Brain microvascular endothelial cell (primary cell): ENCODE measurements at regions of chr5 and their contacts with region 1.

Region 1: DNA sequence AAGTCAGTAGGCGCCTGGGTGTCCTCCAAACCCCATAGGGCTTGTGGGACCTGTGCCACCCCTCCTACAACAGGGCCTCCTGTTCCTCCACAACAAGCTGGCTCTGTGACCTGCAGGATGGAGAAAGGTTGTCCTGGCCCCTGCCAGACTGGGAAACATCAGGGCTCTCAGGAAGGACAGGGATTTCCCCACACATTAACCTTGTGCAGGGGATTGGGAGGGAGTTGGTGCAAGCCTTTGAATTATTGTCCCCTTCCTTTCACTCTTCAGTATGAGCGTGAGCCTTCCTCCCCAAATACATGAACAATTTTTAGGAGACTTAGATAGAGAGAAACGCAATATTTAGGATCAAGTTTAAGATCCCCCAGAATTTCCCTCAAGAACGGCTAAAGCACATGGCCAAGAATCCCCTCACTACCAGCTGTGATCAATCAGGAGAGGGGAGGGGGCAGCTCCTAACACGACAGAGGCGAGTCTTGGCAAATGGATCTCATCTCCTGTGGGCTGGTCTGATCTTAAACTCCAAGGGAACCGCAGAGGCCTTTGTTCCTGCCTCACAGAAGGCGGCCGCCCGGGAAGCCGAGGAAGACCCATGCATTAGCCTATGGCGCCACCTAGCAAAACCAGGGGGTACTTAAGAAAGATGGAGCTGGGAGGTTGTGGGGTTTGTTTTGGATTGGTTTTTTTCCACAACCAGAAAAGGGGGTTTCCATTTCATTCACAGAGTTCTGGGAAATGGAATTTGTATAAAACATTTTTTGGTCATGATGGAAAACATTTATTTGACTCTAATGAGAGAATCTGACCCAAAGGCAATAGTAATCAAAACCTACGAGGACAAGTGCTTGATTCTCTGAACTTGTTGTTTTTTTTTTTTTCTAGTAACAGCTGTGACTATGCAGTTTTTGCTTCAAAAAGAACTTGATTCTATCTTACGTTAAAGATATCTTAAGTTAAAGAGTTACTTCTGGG is 36.1 kb upstream of the OSMR start:
- DNase-seq: peak; percentile 88
- H3K4me3 ChIP-seq: no peak overlapping the region
- H3K27ac ChIP-seq: peak overlapping the region; percentile 27
- H3K27me3 ChIP-seq: no peaks in the 10 kb centered on the region
- CTCF ChIP-seq: peak; percentile 94

Region 2: GRCh38 chr5:38441453-38442246 is 368.0 kb before region 1 on chr5:
- in situ Hi-C with region 1: loop called (anchors 10 kb)
- DNase-seq: peak; percentile 88
- H3K4me3 ChIP-seq: no peak overlapping the region
- H3K27ac ChIP-seq: no peak overlapping the region
- H3K27me3 ChIP-seq: no peaks in the 10 kb centered on the region
- CTCF ChIP-seq: peak; percentile 98

Region 3: DNA sequence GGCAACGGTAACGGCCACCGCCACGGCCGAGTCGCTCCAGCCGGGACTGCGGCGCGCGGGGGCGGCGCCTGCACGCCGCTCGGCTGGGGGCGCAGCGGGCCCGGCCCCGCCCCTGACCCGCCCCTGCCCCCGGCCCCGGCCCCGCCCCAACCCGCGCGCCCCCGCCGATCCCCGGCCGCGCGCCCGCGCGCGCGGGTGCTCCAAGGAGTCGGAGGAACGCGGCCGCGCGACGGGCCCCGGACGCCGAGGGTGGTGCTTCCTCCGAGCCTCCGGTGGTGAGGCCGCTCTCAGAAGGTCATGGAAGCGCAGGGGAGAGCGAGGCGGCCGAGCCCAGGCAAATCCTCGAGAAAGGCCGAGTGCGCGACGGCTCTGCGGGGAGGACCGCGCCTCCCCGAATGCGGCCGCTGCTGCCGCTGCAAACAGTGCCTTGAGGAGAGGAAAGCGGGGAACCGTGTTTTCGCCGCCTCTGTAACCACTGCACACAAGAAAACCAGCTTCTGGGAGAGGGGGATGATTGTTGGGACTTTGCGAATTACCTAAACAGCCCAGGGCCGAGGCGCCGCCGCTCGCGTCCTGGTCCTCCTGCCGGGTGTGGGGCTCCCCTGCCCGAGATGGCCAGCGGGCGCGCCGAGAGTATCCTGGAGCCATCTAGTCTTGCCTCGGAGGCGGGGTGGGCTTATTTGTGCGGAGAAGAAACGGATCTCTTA is 252.9 kb before region 1 on chr5 and contains the start of gene LIFR:
- in situ Hi-C with region 1: loop called (anchors 10 kb)
- DNase-seq: peak; percentile 69
- H3K4me3 ChIP-seq: peak within 1 kb of the TSS; percentile 80
- H3K27ac ChIP-seq: peak within 1 kb of the TSS; percentile 71
- H3K27me3 ChIP-seq: no peaks in the 10 kb centered on the region
- CTCF ChIP-seq: no peak

Region 4: DNA sequence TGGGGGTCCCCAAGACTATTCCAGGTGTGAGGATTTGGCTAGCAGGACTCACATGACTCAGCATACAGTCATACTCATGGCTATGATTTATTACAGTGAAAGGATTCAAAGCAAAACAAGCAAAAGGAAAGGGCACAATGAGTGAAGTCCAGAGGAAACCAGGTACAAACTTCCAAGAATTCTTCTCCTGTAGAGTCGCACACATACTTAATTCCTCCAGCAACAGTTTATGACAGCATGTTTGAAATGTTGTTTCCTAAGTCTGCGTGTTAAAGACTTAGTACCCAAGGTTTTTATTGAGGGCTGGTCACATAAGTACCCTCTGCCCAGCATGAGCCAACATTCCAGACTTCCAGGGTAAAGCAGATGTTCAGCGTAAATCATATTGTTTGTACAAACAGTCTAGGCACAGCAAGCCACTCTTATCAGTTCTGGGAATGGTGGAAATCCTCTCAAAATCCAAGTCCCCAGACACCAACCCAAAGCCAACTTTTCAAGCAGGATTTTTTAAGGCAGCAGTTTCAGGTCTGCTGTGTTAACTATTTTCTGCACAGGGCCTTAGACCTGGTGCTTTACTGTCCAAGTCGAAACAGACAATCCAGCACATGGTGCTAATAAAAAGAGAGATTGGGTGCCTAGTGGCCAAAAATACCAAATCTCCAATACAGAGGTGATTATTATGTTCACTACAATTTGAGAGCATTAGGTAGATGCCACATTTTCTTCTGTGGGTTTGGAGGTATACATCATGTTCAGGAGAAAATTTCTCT is 283.1 kb after region 1 on chr5:
- in situ Hi-C with region 1: no loop called
- DNase-seq: no peak
- H3K4me3 ChIP-seq: no peak overlapping the region
- H3K27ac ChIP-seq: peak overlapping the region; percentile 36
- H3K27me3 ChIP-seq: no peaks in the 10 kb centered on the region
- CTCF ChIP-seq: no peak